Mammary epithelial cell (primary cell): ENCODE measurements at regions of chr11 and their contacts with region 1.

Region 1: DNA sequence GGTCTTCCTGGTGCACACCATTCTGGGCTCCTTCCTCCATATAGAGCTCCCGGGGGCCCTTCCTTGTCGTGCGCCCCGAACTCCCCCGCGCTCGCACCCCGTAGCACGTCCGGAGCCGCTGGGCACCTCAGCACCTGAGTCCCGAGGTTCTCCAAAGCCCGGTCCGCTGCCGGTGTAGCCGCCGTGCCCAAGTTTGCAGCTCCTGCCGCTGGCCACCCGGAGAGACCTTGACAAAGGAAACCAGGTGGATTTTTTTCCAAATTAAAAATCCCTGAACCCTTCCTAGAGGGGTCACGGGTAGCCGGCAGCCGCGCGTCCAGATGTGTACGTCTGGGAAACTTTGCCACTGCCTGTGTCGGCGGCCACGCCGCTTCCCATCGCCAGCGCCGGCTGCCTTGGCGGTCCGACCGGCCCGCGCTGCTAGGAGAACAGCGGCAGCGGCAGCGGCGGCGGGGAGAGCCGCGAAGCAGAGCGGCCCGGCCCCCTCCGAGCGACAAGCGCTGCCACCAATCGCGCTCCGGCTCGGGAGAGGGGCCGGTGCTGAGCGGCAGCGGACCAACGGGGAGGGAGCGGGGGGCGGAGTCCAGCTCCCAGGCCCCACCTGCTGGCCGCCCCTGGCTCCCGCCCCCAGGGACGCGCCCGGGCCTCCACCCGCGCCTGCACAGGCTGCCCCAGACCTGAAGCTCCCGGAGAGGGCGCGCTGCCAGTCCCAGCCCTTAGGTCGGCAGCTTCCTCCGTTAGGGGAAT is at the start of gene GALNT18:
- DNase-seq: peak; percentile 97
- H3K4me3 ChIP-seq: peak within 1 kb of the TSS; percentile 68 to 75 (median 75)
- H3K27ac ChIP-seq: peak within 1 kb of the TSS; percentile 51
- H3K4me1 ChIP-seq: peaks cover 27% of the 10 kb centered on the region
- H3K27me3 ChIP-seq: no peaks in the 10 kb centered on the region
- CTCF ChIP-seq: peak; percentile 12 to 53
- total RNA-seq, gene GALNT18: 25.0 to 34.3 TPM

Region 2: GRCh38 chr11:10792398-10792975 is 829.3 kb before region 1 on chr11:
- CTCF ChIA-PET with region 1: no interaction called
- dilution Hi-C with region 1: no loop called
- in situ Hi-C with region 1: no loop called
- intact Hi-C with region 1: loop called (anchors 10 kb)
- DNase-seq: peak; percentile 59
- H3K4me3 ChIP-seq: peak overlapping the region in 1 of 3 experiments; percentile 17
- H3K27ac ChIP-seq: no peak overlapping the region
- H3K4me1 ChIP-seq: peaks cover 7% of the 10 kb centered on the region
- H3K27me3 ChIP-seq: no peaks in the 10 kb centered on the region
- CTCF ChIP-seq: peak; percentile 87 to 95

Region 3: GRCh38 chr11:11391796-11392195 is 229.9 kb before region 1 on chr11:
- CTCF ChIA-PET with region 1: no interaction called
- dilution Hi-C with region 1: no loop called
- in situ Hi-C with region 1: no loop called
- intact Hi-C with region 1: loop called (anchors 10 kb)
- DNase-seq: peak; percentile 84
- H3K4me3 ChIP-seq: no peak overlapping the region
- H3K27ac ChIP-seq: peak overlapping the region; percentile 60
- H3K4me1 ChIP-seq: peaks cover 38% of the 10 kb centered on the region
- H3K27me3 ChIP-seq: no peaks in the 10 kb centered on the region
- CTCF ChIP-seq: no peak

Region 4: GRCh38 chr11:11552529-11553087 is 69.1 kb before region 1 on chr11:
- CTCF ChIA-PET with region 1: interaction called, 3 read pairs
- dilution Hi-C with region 1: no loop called
- in situ Hi-C with region 1: no loop called
- intact Hi-C with region 1: loop called (anchors 1 kb)
- DNase-seq: no peak
- H3K4me3 ChIP-seq: no peak overlapping the region
- H3K27ac ChIP-seq: no peak overlapping the region
- H3K4me1 ChIP-seq: peaks cover 4% of the 10 kb centered on the region
- H3K27me3 ChIP-seq: no peaks in the 10 kb centered on the region
- CTCF ChIP-seq: no peak

Region 5: DNA sequence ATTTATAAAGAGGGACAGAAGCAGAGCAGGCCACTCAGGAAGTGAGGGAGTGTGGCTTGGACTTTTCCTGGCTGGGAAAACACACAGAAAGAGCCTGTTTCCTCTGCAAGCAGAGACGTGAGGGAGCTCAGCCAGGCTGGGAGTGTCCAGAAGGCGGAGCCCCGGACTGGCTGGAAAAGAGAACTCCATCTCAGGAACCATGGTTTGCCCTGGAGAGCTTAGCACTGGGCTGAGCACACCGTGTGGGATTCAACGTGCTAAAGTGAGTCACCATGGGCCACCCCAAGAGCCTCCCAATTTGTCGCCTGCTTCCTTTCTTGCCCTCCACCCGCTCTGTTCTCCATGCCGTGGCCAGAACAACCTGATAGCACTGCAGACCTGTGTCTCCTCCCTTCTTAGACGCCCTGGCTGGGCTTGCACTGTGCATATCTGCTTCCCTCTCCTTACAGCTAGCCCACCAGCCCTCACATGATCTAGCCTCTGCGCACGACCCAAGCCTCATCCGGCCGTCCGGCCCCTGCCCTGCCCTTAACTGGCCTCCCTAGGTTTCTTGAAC is 51.7 kb before region 1 on chr11:
- CTCF ChIA-PET with region 1: interaction called, 3 read pairs
- dilution Hi-C with region 1: no loop called
- in situ Hi-C with region 1: no loop called
- intact Hi-C with region 1: loop called (anchors 5 kb)
- DNase-seq: peak; percentile 62
- H3K4me3 ChIP-seq: no peak overlapping the region
- H3K27ac ChIP-seq: peak overlapping the region; percentile 85
- H3K4me1 ChIP-seq: peaks cover 38% of the 10 kb centered on the region
- H3K27me3 ChIP-seq: no peaks in the 10 kb centered on the region
- CTCF ChIP-seq: no peak

Region 6: DNA sequence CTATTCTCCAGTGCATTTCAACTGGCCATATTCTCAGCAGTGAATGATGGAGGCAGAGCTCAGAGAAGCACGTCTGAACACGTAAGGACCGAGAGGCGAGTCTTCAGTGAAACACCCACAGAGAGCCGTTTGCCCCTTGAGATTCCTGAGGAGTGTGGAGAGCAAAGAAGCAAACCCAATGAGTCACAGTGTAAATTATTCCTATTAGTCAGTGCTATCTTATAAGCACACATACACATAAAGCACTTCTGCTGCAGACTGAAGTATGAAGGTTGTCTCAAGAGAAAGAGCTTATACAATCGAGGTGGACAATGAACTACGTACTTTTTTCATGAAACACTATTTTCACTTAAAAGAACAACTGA is 37.3 kb before region 1 on chr11:
- CTCF ChIA-PET with region 1: interaction called, 3 read pairs
- dilution Hi-C with region 1: no loop called
- in situ Hi-C with region 1: no loop called
- intact Hi-C with region 1: loop called (anchors 2 kb)
- DNase-seq: peak; percentile 97
- H3K4me3 ChIP-seq: peak overlapping the region in 2 of 3 experiments; percentile 14 to 21
- H3K27ac ChIP-seq: peak overlapping the region; percentile 75
- H3K4me1 ChIP-seq: peaks cover 53% of the 10 kb centered on the region
- H3K27me3 ChIP-seq: no peaks in the 10 kb centered on the region
- CTCF ChIP-seq: no peak

Region 7: DNA sequence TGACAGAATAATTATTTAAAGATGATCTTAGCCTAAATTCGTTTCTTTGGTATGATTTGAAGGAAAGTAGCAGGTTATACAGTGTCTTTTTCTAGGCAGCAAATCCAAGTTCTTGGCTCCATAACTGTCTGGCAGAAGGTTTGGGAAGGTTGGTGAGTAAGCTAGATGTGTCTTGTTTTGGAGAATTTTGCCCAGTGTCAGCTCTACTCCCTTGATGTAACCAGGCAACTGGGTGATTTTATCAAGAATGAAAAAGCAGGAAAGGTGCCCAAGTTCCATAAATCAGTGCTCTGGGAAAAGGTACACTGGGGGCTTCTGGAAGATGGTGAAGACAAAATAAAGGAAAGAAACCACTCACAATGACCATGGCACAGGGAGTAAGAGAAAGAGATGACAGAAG is 148.6 kb after region 1 on chr11:
- CTCF ChIA-PET with region 1: no interaction called
- dilution Hi-C with region 1: no loop called
- in situ Hi-C with region 1: no loop called
- intact Hi-C with region 1: no loop called
- DNase-seq: no peak
- H3K4me3 ChIP-seq: no peak overlapping the region
- H3K27ac ChIP-seq: no peak overlapping the region
- H3K4me1 ChIP-seq: no peaks in the 10 kb centered on the region
- H3K27me3 ChIP-seq: peaks cover 3% of the 10 kb centered on the region
- CTCF ChIP-seq: no peak

Region 8: DNA sequence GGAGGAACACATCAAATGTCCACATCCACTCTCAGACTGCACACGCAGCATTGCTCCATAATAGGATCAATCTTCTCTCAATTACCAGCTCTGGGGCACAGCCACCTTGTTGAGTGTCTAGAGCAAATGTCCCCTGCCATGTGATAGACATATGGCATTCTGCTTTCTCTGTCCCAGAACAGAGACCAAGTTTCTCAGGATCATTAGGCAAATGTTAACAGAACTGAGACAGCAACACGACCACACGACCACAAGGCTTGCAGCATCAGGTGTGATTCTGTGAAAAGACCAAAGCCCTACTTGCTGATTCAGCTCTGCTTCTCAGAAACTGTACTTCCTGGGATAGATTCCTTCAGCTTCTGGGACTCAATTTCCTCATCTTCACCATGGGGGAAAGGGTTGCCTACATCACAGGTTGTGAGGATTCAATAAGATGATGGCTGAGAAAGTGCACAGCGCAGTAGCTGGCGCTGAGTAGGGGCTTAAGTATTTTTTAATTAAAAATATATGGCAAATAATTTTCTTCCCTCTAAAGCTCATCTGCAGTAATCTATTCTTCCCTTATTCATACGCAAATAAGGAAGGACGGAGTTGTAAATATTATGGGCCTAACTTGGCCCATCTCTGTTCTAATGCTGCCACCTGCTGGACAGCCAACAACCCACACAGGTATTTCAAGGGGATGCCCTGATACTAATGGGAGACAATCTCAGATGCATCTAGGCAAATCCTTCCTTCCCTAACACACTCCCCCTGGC is 165.7 kb after region 1 on chr11:
- CTCF ChIA-PET with region 1: interaction called, 3 read pairs
- dilution Hi-C with region 1: no loop called
- in situ Hi-C with region 1: loop called in 1 of 2 experiments (anchors 5 kb)
- intact Hi-C with region 1: loop called (anchors 1 kb)
- DNase-seq: peak; percentile 52
- H3K4me3 ChIP-seq: no peak overlapping the region
- H3K27ac ChIP-seq: no peak overlapping the region
- H3K4me1 ChIP-seq: peaks cover 13% of the 10 kb centered on the region
- H3K27me3 ChIP-seq: no peaks in the 10 kb centered on the region
- CTCF ChIP-seq: peak; percentile 78 to 83